ACHN (cell line): ENCODE measurements at regions of chr2 and their contacts with region 1.

Region 1: GRCh38 chr2:10448208-10448645 is at the start of gene ODC1:
- DNase-seq: peak; percentile 94

Region 2: DNA sequence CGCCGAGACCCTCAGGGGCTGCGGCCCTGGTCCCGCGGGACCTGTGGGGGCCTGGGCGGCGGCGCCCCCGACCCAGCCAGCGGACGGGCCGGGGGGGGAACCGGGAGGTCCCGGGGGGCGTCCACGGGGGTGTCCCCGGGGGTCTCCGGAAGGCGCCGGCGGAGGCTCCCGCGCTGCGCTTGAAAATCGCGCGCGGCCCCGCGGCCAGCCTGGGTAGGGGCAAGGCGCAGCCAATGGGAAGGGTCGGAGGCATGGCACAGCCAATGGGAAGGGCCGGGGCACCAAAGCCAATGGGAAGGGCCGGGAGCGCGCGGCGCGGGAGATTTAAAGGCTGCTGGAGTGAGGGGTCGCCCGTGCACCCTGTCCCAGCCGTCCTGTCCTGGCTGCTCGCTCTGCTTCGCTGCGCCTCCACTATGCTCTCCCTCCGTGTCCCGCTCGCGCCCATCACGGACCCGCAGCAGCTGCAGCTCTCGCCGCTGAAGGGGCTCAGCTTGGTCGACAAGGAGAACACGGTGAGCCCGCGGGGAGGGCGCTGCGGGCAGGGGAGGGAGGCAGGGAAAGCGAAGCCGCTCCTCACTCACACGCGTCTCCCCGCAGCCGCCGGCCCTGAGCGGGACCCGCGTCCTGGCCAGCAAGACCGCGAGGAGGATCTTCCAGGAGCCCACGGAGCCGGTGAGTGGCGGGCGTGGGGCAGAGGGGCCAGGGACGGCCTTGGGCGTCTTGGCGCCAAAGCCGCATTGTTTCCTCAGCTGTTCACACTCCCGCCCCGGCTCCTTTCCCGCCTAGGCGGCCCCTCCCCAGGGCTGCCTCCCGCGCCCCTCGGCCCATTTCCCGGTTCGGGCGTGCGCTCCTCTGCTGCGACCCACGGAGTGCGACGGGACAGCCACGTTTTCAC is 325.6 kb before region 1 on chr2 and contains the start of gene RRM2:
- in situ Hi-C with region 1: loop called (anchors 25 kb)
- DNase-seq: peak; percentile 95

Region 3: GRCh38 chr2:10659898-10660568 is 211.8 kb after region 1 on chr2:
- in situ Hi-C with region 1: loop called (anchors 10 kb)
- DNase-seq: peak; percentile 89